PC-3 (cell line): ENCODE measurements at regions of chr7 and their contacts with region 1.

Region 1: GRCh38 chr7:112970771-112971170 is 115.9 kb downstream of the GPR85 start:
- DNase-seq: peak; percentile 11
- ATAC-seq: peak; percentile 58
- H3K4me3 ChIP-seq: no peak overlapping the region
- H3K27ac ChIP-seq: no peak overlapping the region
- H3K4me1 ChIP-seq: no peaks in the 10 kb centered on the region
- H3K27me3 ChIP-seq: 0 out of 2 replicates have a peak, but pooled peaks cover 7% of the 10 kb centered on the region
- CTCF ChIP-seq: no peak

Region 2: DNA sequence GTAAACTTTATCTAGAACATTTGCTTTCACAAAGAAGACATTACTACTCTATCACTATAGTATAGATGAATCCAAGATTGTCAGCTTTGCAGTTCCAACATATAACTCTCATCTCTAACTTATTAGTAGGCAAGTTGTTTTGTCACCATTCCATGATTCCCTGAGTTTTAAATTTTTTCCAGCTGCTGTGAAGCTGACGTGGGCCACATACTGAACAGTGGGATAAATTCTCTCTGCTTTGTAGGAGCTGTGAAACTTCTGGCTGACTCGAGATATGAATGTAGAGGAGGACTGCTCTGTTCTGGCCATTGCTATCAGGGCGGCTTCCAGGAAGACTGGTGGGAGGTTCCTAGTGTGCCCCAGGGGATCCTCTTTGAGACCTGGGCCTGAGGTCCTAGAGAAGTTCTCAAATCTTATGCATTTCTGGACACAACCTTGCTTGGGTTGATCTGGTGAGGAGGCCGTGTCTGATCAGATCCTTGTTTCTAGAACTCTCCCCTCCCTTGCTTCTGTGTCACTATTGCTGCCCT is 432.0 kb before region 1 on chr7:
- CTCF ChIA-PET with region 1: no interaction called
- POLR2A ChIA-PET with region 1: interaction called, 14 read pairs
- intact Hi-C with region 1: no loop called
- DNase-seq: no peak
- ATAC-seq: no peak
- H3K4me3 ChIP-seq: no peak overlapping the region
- H3K27ac ChIP-seq: no peak overlapping the region
- H3K4me1 ChIP-seq: no peaks in the 10 kb centered on the region
- H3K27me3 ChIP-seq: peaks cover 23% of the 10 kb centered on the region; the same call in 1 of the 2 replicates
- CTCF ChIP-seq: no peak